ENCODE measurements at regions of chr16 and their contacts with region 1.

Region 1: DNA sequence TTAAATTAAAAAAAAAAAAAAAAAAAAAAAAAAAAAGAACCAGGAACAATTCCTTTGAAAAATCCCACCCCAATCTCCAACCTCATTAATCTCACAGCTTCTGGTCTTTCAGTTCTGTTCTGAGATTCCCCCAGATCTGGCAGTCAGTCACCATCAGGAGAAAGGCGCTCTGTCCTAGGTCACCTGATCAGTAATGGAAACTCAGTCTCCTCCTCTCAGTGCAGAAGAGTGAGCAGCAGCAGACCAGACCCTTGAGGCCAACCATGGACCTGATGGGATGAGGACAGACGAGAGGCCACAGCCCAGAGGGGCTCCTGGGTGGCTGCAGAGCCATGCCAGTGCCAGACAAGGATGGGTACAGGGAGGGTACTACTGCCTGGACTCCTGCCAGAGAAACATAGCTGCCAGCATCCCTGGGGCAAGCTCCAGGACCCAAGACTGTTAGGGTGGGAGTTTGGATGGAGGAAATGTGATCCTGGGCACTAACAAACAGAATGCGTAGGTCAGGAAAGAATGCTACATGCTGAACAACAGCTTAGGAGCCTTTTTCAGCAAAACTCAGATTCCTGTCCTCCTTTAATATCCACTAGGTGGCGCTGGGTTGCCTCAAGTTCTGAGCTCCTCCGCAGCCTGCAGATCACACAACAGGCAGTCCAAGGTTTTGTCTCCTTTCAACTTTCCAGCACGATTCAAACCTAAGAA is 28.7 kb downstream of the MPG start:
- DNase-seq: peak in 1 of 2 donors; percentile 56
- ATAC-seq: peak; percentile 66
- H3K4me3 ChIP-seq: no peak overlapping the region
- H3K27ac ChIP-seq: peak overlapping the region in 1 of 2 donors; percentile 37
- H3K4me1 ChIP-seq: no peaks in the 10 kb centered on the region
- H3K27me3 ChIP-seq: no peaks in the 10 kb centered on the region

Region 2: DNA sequence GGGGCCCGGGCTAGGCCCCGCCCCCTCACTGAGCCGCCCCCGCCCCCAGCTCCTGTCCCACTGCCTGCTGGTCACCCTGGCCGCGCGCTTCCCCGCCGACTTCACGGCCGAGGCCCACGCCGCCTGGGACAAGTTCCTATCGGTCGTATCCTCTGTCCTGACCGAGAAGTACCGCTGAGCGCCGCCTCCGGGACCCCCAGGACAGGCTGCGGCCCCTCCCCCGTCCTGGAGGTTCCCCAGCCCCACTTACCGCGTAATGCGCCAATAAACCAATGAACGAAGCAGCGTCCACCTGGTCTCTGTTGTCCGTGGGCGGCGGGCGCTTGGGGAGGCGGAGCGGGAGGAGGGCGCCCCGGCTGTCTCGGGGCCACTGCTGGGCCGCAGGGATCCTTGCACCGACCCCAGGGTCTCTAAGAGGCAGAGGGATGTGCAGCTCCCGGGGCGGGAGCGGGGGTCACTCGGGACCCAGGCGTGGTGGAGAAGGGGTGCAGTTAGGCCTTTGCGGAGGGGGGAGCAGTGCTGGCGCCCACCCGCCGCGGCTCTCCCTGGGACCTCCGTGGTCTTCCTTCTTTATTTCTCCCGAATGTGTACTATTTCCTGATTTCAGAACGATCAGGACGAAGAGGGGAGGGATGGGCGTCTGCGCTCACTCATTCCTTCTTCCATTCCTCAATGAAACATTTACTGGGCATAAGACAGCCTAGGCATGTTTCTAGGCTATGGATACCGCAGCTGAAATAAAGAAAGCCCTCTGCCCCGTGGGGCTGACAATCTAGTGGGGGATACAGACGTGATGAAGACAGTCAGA is 47.7 kb after region 1 on chr16:
- intact Hi-C with region 1: no loop called
- DNase-seq: peak in 1 of 2 donors; percentile 67
- ATAC-seq: no peak
- H3K4me3 ChIP-seq: peak overlapping the region in 1 of 2 donors; percentile 4
- H3K27ac ChIP-seq: no peak overlapping the region
- H3K4me1 ChIP-seq: no peaks in the 10 kb centered on the region
- H3K27me3 ChIP-seq: peaks cover 0 to 2% of the 10 kb centered on the region in 2 donors

Region 3: GRCh38 chr16:180938-181667 is 74.3 kb after region 1 on chr16:
- intact Hi-C with region 1: loop called (anchors 2 to 5 kb)
- DNase-seq: peak; percentile 72 to 92
- ATAC-seq: peak; percentile 88
- H3K4me3 ChIP-seq: no peak overlapping the region
- H3K27ac ChIP-seq: no peak overlapping the region
- H3K4me1 ChIP-seq: no peaks in the 10 kb centered on the region
- H3K27me3 ChIP-seq: no peaks in the 10 kb centered on the region

Region 4: GRCh38 chr16:361872-362701 is 255.3 kb after region 1 on chr16:
- intact Hi-C with region 1: loop called (anchors 5 kb)
- DNase-seq: peak; percentile 78 to 87
- ATAC-seq: peak; percentile 50
- H3K4me3 ChIP-seq: no peak overlapping the region
- H3K27ac ChIP-seq: no peak overlapping the region
- H3K4me1 ChIP-seq: no peaks in the 10 kb centered on the region
- H3K27me3 ChIP-seq: no peaks in the 10 kb centered on the region